Ovary (tissue), 10 donors: ENCODE measurements at regions of chr3 and their contacts with region 1.

Region 1: GRCh38 chr3:180134619-180135018 is 97.9 kb upstream of the PEX5L start:
- DNase-seq: no peak
- H3K4me3 ChIP-seq: no peak overlapping the region
- H3K27ac ChIP-seq: no peak overlapping the region
- H3K4me1 ChIP-seq: no peaks in the 10 kb centered on the region
- H3K27me3 ChIP-seq: no peaks in the 10 kb centered on the region
- CTCF ChIP-seq: no peak
- EP300 ChIP-seq: no peak
- POLR2A ChIP-seq: no peak

Region 2: GRCh38 chr3:180163719-180164118 is 29.1 kb after region 1 on chr3:
- intact Hi-C with region 1: no loop called
- DNase-seq: no peak
- H3K4me3 ChIP-seq: no peak overlapping the region
- H3K27ac ChIP-seq: no peak overlapping the region
- H3K4me1 ChIP-seq: no peaks in the 10 kb centered on the region
- H3K27me3 ChIP-seq: no peaks in the 10 kb centered on the region
- CTCF ChIP-seq: no peak
- EP300 ChIP-seq: no peak
- POLR2A ChIP-seq: no peak

Region 3: GRCh38 chr3:180188512-180189309 is 54.1 kb after region 1 on chr3:
- intact Hi-C with region 1: no loop called
- DNase-seq: no peak
- H3K4me3 ChIP-seq: no peak overlapping the region
- H3K27ac ChIP-seq: no peak overlapping the region
- H3K4me1 ChIP-seq: no peaks in the 10 kb centered on the region
- H3K27me3 ChIP-seq: no peaks in the 10 kb centered on the region
- CTCF ChIP-seq: no peak
- EP300 ChIP-seq: no peak
- POLR2A ChIP-seq: no peak

Region 4: DNA sequence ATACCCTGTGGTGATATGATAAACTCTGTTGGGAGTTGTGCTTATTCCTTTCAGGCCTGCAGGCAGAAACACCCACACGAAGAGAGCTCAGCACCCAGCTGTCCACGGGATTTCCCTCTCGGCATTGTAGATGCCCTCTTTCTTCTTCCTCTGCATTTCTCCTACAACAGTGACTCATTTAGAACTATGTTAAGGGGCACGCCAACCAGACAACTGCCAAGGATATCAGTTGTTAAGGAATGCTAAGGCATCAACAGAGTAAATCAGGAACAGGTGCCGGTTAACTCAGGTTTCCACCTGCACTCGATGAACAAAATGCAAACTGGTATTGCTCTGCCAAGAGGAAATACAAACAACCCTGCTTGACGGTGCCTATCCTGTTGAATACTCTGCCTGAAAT is 172.1 kb after region 1 on chr3:
- intact Hi-C with region 1: loop called in 1 of 4 experiments (anchors 5 kb)
- DNase-seq: no peak
- H3K4me3 ChIP-seq: no peak overlapping the region
- H3K27ac ChIP-seq: no peak overlapping the region
- H3K4me1 ChIP-seq: peaks cover 3% of the 10 kb centered on the region
- H3K27me3 ChIP-seq: no peaks in the 10 kb centered on the region
- CTCF ChIP-seq: no peak
- EP300 ChIP-seq: no peak
- POLR2A ChIP-seq: no peak